Activated CD4-positive, alpha-beta memory T cell treated with anti-CD3 and anti-CD28 coated beads for 36 hours (primary cell): ENCODE measurements at regions of chr6 and their contacts with region 1.

Region 1: DNA sequence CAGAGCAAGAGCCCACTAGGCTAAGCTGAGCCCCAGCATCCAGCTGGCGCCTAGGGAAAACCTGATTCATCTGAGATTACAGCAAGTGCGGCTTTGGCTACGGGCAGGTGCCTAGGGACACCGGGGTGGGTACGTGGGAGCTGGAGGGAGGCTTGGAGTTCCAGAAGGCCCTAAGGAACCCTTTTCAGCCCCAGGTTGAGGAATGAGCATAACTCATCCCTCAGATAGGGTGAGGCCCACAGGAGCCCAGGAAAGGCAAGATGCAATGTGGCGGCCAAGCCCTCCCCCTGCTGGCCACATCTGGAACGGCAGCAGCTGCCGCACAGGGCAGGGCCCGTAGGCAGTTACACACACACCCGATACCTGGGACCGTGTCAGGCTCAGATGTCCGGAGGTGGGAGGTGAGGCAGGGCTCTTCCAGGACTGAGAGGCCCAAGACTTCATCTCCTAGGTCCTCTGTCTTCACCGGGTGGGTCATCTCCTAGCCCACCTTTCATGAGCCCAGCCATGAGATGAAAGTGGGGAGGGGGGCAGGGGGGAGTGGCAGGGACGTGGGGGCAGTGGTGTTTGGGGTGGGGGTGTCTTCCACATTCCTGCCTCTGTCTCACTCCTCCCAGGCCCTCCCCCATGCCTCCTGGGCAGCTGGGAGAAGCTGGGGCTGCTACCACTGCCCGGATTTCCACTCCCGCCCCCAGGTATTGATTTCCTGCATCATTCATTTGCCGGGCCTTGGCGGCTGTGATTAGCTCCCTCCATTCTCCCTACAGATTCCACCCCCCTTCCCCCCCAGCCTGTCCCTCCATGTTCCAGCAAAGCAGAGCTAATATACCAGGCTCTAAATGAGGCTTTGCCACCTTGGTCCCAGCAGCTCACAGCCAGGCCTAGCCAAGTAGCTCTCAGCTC is 5.5 kb downstream of the MDGA1 start:
- DNase-seq: peak; percentile 88
- H3K4me3 Mint-ChIP-seq: no peak overlapping the region
- H3K27ac Mint-ChIP-seq: no peak overlapping the region
- H3K4me1 Mint-ChIP-seq: peaks cover 21% of the 10 kb centered on the region
- H3K27me3 Mint-ChIP-seq: peaks cover 6% of the 10 kb centered on the region

Region 2: DNA sequence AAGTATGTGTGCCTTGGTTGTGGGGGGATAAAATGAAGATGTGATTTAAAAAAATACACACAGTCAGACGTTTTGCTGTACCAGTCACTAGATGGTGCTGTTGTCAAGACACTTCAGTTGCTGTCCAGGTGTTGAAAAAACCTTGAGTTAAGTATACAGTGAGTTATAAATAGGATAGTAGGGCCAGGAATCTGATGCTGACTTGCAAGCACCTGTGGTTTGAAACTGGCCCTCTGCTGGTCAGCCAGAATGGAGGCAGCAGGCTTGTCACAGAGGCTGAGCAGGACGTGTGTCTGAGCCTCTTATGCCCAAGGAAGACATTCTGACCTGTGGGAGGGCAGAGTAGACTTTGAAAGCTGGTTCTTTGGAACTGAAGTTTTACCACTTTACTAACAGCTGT is 310.6 kb before region 1 on chr6:
- CTCF ChIA-PET with region 1: interaction called, 11 read pairs
- POLR2A ChIA-PET with region 1: no interaction called
- intact Hi-C with region 1: loop called (anchors 2 kb)
- DNase-seq: peak; percentile 16
- H3K4me3 Mint-ChIP-seq: no peak overlapping the region
- H3K27ac Mint-ChIP-seq: no peak overlapping the region
- H3K4me1 Mint-ChIP-seq: no peaks in the 10 kb centered on the region
- H3K27me3 Mint-ChIP-seq: no peaks in the 10 kb centered on the region

Region 3: DNA sequence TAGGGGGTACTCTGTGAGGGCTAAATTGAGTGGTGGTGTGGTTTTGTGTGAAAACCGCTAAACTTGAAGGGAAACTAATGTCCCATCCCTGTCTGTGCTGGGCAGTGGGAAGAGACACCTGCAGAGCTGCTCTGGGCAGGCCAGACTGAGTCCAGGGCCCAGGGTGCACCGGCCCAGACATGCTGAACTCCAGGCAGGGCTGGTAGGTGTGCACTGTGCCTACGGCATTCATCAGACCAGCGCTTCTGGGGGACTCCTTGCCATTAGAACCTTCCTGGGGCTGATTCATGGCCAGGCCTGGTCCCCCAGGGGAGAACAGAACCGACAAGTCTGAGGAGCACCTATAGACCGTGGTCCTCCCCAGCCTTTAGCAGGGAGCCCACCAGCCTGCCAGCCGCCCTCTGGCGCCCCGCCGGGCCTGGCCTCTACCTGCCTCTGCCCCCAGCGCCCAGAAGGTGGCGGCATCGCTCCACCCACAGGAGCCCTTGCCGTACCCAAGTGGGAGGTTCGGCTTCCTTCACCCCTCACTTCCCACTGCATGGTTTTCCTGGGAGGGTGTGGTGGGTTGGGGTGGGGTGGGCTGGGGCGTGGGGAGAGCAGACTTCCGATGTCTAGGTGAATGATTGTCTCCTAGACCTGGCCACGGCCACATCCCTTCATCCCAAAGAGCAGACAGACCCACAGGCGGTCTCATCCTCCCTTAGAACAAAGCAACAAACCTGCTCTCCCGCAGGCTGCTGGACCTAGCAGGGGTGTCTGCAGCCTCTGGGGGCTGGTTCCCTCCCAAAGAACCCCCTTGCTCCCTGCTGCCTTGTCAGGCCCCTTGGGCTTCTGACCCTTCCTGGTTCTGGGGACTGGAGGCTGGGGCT is 208.0 kb before region 1 on chr6:
- CTCF ChIA-PET with region 1: interaction called, 15 read pairs
- POLR2A ChIA-PET with region 1: no interaction called
- intact Hi-C with region 1: loop called (anchors 1 kb)
- DNase-seq: peak; percentile 80
- H3K4me3 Mint-ChIP-seq: no peak overlapping the region
- H3K27ac Mint-ChIP-seq: no peak overlapping the region
- H3K4me1 Mint-ChIP-seq: peaks cover 17% of the 10 kb centered on the region
- H3K27me3 Mint-ChIP-seq: no peaks in the 10 kb centered on the region

Region 4: GRCh38 chr6:37582306-37582705 is 109.8 kb before region 1 on chr6:
- CTCF ChIA-PET with region 1: interaction called, 11 read pairs
- POLR2A ChIA-PET with region 1: no interaction called
- intact Hi-C with region 1: no loop called
- DNase-seq: no peak
- H3K4me3 Mint-ChIP-seq: no peak overlapping the region
- H3K27ac Mint-ChIP-seq: no peak overlapping the region
- H3K4me1 Mint-ChIP-seq: no peaks in the 10 kb centered on the region
- H3K27me3 Mint-ChIP-seq: no peaks in the 10 kb centered on the region

Region 5: DNA sequence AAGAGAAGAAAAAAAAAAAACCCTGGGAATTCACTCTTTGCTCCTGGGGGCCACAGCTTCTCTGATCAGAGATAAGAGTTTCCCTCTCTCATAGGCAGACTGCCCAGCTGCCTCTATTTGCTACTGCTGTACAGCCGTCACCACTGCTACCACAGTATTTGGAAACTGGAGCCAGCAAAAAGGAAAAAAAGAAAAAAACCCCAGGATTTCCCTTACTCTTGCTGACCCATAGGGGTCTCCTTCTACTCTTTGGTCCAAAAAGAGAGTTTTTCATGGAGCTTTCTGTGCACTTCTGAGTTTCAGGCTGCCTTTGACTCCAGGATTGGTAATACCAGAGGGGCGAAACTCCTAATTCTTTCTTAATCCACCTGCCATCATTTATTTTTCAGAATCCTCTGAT is 84.2 kb before region 1 on chr6:
- CTCF ChIA-PET with region 1: no interaction called
- POLR2A ChIA-PET with region 1: no interaction called
- intact Hi-C with region 1: no loop called
- DNase-seq: no peak
- H3K4me3 Mint-ChIP-seq: no peak overlapping the region
- H3K27ac Mint-ChIP-seq: no peak overlapping the region
- H3K4me1 Mint-ChIP-seq: no peaks in the 10 kb centered on the region
- H3K27me3 Mint-ChIP-seq: peaks cover 4% of the 10 kb centered on the region